T47D (cell line): ENCODE measurements at regions of chr14 and their contacts with region 1.

Region 1: GRCh38 chr14:91299121-91300115 is 54.9 kb upstream of the GPR68 start:
- DNase-seq: no peak

Region 2: DNA sequence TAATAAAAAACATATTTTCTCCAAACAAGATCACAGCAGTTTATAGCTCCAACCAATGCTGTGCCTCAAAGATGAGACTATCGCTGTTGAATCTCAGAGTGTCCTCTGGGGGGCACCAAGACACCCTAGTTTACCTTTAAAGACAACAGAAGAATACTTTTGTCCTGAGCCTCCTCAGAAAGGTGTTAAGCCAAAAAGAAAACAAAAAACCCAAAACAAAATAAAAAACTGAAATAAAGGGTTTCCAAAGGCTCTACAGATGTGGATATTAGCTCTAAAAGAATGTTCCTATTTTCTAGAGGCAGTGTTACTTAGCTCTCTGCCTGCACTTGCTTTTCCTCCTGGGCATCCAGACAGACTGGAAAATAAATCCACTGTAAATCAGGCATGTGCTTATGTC is 396.3 kb before region 1 on chr14:
- in situ Hi-C with region 1: loop called (anchors 10 kb)
- DNase-seq: peak; percentile 44 to 81

Region 3: GRCh38 chr14:91119556-91120311 is 179.7 kb before region 1 on chr14:
- in situ Hi-C with region 1: no loop called
- DNase-seq: peak in 1 of 2 experiments; percentile 42

Region 4: GRCh38 chr14:91466192-91466591 is 166.8 kb after region 1 on chr14:
- in situ Hi-C with region 1: no loop called
- DNase-seq: no peak

Region 5: GRCh38 chr14:91693346-91693745 is 393.9 kb after region 1 on chr14:
- in situ Hi-C with region 1: no loop called
- DNase-seq: no peak